H1 (cell line): ENCODE measurements at regions of chr22 and their contacts with region 1.

Region 1: GRCh38 chr22:38104084-38104483 is 6.4 kb downstream of the BAIAP2L2 start:
- DNase-seq: peak in 1 of 2 experiments; percentile 65
- H3K4me3 ChIP-seq: no peak overlapping the region
- H3K27ac ChIP-seq: no peak overlapping the region
- H3K4me1 ChIP-seq: no peaks in the 10 kb centered on the region
- H3K27me3 ChIP-seq: no peaks in the 10 kb centered on the region
- CTCF ChIP-seq: peak; percentile 72 to 81 (median 80)
- EP300 ChIP-seq: no peak
- POLR2A ChIP-seq: no peak
- RAD21 ChIP-seq: peak; percentile 63 to 72

Region 2: DNA sequence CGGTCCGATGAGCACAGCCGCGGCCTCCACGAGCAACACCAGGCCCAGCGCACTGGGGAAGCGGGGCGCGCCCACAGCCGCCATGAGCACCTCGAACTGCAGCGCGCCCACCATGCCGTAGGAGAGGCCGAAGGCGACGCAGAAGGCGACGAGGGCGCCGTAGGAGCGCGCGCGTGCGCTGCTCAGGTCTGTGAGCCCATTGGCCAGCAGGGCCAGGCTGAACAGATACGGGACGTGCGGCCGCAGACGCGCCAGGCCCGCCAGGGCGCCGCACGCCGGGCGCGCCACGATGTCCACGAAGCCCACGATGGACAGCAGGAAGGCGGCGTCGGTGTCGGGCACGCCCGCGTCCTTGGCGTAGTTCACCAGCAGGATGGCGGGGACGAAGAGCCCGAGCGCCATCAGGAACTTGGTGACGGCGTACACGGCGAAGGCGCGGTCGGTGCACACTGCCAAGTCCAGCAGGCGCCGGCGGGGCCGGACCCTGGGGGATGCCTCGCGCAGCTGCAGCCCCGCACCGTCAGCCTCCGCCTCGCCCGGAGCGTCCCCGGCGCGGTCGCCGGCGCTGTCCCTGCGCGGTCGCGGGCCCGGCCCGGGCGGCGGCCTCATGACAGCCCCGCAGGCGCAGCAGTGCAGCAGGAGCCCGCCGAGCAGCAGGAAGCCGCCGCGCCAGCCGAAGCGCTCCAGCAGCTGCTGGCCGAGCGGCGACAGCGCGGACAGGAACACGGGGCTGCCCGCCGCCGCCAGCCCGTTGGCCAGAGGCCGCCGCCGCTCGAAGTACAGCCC is 23.0 kb before region 1 on chr22:
- CTCF ChIA-PET with region 1: interaction called, 264 read pairs
- POLR2A ChIA-PET with region 1: no interaction called
- DNase-seq: peak in 1 of 2 experiments; percentile 75
- H3K4me3 ChIP-seq: peak overlapping the region; percentile 24 to 48 (median 30); a peak in 7 of 8 replicates
- H3K27ac ChIP-seq: no peak overlapping the region
- H3K4me1 ChIP-seq: peaks cover 0 to 25% (median 18%) of the 10 kb centered on the region in 4 experiments; a peak in 6 of 7 replicates
- H3K27me3 ChIP-seq: peaks cover 7 to 37% (median 33%) of the 10 kb centered on the region in 4 experiments
- CTCF ChIP-seq: no peak
- EP300 ChIP-seq: no peak
- POLR2A ChIP-seq: no peak
- RAD21 ChIP-seq: no peak

Region 3: GRCh38 chr22:38153821-38154562 is 49.9 kb after region 1 on chr22:
- CTCF ChIA-PET with region 1: interaction called, 23 read pairs
- POLR2A ChIA-PET with region 1: no interaction called
- DNase-seq: peak in 1 of 2 experiments; percentile 62
- H3K4me3 ChIP-seq: no peak overlapping the region
- H3K27ac ChIP-seq: no peak overlapping the region
- H3K4me1 ChIP-seq: peaks cover 0 to 7% (median under 1%) of the 10 kb centered on the region in 4 experiments; a peak in 3 of 7 replicates
- H3K27me3 ChIP-seq: no peaks in the 10 kb centered on the region
- CTCF ChIP-seq: peak in 1 of 3 experiments; percentile 49; a peak in 2 of 4 replicates
- EP300 ChIP-seq: no peak
- POLR2A ChIP-seq: no peak
- RAD21 ChIP-seq: peak; percentile 70 to 72

Region 4: DNA sequence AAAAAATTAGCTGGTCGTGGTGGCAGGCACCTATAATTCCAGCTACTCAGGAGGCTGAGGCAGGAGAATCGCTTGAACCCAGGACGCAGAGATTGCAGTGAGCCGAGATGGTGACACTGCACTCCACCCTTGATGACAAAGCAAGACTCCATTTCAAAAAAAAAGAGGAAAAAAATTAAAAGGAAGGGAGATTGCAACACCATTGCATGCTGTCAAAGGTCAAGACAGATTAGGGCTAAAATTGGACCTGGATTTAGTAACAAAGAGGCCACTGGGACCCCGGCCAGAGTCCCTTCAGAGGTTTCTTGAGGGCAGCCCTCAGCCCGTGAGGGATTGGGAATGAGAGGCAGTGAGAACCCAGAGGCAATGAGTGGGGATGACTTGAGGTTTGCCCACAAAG is 89.5 kb after region 1 on chr22:
- CTCF ChIA-PET with region 1: interaction called, 10 read pairs
- POLR2A ChIA-PET with region 1: no interaction called
- DNase-seq: no peak
- H3K4me3 ChIP-seq: no peak overlapping the region
- H3K27ac ChIP-seq: no peak overlapping the region
- H3K4me1 ChIP-seq: peaks cover 0 to 1% (median 0%) of the 10 kb centered on the region in 4 experiments; a peak in 1 of 7 replicates
- H3K27me3 ChIP-seq: no peaks in the 10 kb centered on the region; a peak in 3 of 7 replicates
- CTCF ChIP-seq: no peak
- EP300 ChIP-seq: no peak
- POLR2A ChIP-seq: no peak
- RAD21 ChIP-seq: no peak